ENCODE measurements at regions of chr15 and their contacts with region 1.

Region 1: GRCh38 chr15:89874926-89875564 is 18.7 kb downstream of the AP3S2 start:
- DNase-seq: peak; percentile 81
- H3K4me3 ChIP-seq: no peak overlapping the region
- H3K27ac ChIP-seq: no peak overlapping the region
- H3K4me1 ChIP-seq: no peaks in the 10 kb centered on the region
- H3K27me3 ChIP-seq: no peaks in the 10 kb centered on the region
- CTCF ChIP-seq: peak; percentile 74 to 89 (median 86)
- EP300 ChIP-seq: no peak
- POLR2A ChIP-seq: no peak

Region 2: DNA sequence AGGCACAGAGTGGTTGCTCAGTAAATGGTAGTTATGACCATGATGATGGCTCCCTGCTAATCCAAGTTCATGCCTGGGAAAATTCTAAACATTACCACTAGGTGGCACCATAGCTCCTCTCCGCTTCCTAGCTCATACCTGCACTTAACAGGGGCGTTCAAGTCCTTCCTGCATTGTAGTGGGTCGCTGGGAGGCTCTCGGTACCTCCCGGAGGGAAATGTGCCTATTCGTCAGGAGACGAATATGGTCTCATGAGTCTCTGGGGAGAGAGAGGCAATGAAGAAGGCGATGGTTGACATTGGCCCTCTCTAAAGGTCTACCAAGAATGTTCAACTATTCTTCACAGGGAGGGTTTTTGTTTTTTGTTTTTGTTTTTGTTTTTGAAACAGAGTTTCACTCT is 134.9 kb before region 1 on chr15:
- intact Hi-C with region 1: loop called (anchors 1 kb)
- DNase-seq: peak; percentile 74
- H3K4me3 ChIP-seq: no peak overlapping the region
- H3K27ac ChIP-seq: no peak overlapping the region
- H3K4me1 ChIP-seq: peaks cover 0 to 3% (median 0%) of the 10 kb centered on the region in 4 donors
- H3K27me3 ChIP-seq: peaks cover 0 to 2% (median 0%) of the 10 kb centered on the region in 3 donors
- CTCF ChIP-seq: peak; percentile 74 to 93 (median 90)
- EP300 ChIP-seq: no peak
- POLR2A ChIP-seq: no peak

Region 3: GRCh38 chr15:89760303-89761008 is 114.6 kb before region 1 on chr15:
- intact Hi-C with region 1: loop called (anchors 2 kb)
- DNase-seq: peak; percentile 83
- H3K4me3 ChIP-seq: no peak overlapping the region
- H3K27ac ChIP-seq: peak overlapping the region in 3 of 4 donors; percentile 8 to 63 (median 61)
- H3K4me1 ChIP-seq: peaks cover 0 to 14% (median 7%) of the 10 kb centered on the region in 4 donors
- H3K27me3 ChIP-seq: no peaks in the 10 kb centered on the region
- CTCF ChIP-seq: peak; percentile 75 to 95 (median 92)
- EP300 ChIP-seq: no peak
- POLR2A ChIP-seq: no peak

Region 4: GRCh38 chr15:89898614-89899294 is 23.7 kb after region 1 on chr15:
- intact Hi-C with region 1: no loop called
- DNase-seq: no peak
- H3K4me3 ChIP-seq: no peak overlapping the region
- H3K27ac ChIP-seq: no peak overlapping the region
- H3K4me1 ChIP-seq: peaks cover 0 to 3% (median 2%) of the 10 kb centered on the region in 4 donors
- H3K27me3 ChIP-seq: no peaks in the 10 kb centered on the region
- CTCF ChIP-seq: peak in 2 of 4 experiments; percentile 19 to 30
- EP300 ChIP-seq: no peak
- POLR2A ChIP-seq: no peak